GM10248 (cell line): ENCODE measurements at regions of chr6 and their contacts with region 1.

Region 1: GRCh38 chr6:139334806-139335446 is 39.5 kb downstream of the CITED2 start:
- DNase-seq: no peak
- CTCF ChIP-seq: no peak

Region 2: DNA sequence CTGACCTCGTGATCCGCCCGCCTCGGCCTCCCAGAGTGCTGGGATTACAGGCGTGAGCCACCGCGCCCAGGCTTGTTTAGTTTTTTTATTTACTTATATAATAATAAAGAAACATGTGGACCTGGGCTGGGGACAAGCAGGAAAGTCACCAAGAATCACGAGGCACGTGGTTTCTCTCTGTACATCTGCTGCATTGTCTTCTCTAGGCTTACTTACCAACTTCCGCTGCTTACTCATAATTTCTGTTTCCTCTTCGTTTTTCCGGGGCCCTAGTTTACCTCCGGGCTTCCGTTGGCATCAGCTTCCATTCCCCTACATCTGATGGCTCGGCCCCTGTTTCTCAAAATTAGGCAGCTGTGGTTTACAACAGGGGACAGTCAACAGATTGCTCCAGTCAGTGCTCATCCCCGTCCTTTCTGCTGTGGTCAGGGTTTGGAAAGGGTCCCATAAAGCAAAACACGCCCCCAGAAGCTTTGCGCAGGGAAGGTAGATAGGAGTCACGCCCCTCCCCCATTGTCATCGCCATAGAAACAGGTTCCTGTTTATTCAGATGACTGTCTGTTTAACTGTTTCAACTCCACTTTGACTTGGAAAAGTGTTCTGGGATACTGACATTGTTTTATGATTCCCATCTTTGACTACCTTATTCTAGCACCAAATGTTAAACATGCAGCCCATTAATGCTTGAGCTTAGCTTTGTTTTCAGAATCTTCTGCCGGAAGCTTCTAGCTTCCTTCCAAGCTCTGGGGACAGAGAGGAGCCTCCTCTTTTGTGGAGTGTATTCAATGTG is 11.2 kb before region 1 on chr6:
- CTCF ChIA-PET with region 1: interaction called, 17 read pairs
- POLR2A ChIA-PET with region 1: no interaction called
- DNase-seq: peak; percentile 31
- CTCF ChIP-seq: no peak